Activated CD4-positive, alpha-beta T cell treated with anti-CD3 and anti-CD28 coated beads for 36 hours (primary cell): ENCODE measurements at regions of chr2 and their contacts with region 1.

Region 1: DNA sequence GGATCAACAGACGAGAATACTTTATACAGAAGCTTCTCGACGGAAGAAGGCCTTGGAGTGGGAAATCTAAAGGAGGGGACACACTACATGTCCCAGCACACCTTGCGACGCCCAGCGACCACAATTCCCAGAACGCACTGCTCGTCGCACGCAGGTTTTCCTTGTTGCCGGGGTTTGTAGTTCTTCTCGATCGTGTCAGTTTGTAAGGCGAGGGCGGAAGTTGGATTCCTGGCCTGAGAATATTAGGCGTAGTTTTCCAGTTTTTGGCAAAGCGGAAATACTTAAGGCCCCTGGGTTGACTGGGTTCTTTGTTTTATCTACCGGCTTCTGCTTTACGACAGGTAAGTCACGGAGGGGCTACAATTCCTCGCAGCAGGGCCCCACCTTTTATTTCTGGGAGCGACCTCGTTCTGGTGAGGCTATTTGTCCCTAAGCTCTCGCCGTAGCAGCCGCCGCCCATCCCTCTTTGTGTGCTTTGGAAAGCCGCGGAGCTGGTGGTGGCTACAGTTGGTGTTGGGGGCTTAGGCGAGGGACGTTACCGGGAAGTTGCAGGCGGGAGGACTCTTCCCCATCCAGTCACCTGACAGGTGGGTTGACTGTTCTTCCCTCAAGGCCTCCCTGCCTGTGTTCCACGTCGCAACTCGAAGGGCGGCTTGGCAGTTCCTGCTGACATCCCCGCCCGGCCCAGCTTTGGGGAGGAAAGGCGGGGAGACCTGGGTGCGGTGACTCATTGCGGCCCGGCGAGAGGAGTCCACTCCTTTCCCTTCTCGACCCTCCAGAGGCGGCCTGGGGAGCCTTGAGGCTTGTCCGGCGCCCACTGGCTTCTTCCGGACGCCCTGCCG is at the start of gene DYNC1I2:
- DNase-seq: peak; percentile 86
- ATAC-seq: peak; percentile 95
- H3K4me3 Mint-ChIP-seq: peak within 1 kb of the TSS; percentile 83
- H3K27ac Mint-ChIP-seq: peak within 1 kb of the TSS; percentile 90
- H3K4me1 Mint-ChIP-seq: peaks cover 15% of the 10 kb centered on the region
- H3K27me3 Mint-ChIP-seq: no peaks in the 10 kb centered on the region
- total RNA-seq, gene DYNC1I2: 46.2 to 51.1 TPM

Region 2: GRCh38 chr2:171574149-171574795 is 113.2 kb before region 1 on chr2:
- CTCF ChIA-PET with region 1: interaction called, 4 read pairs
- POLR2A ChIA-PET with region 1: no interaction called
- intact Hi-C with region 1: loop called in 1 of 2 experiments (anchors 5 kb)
- DNase-seq: peak; percentile 91
- ATAC-seq: peak; percentile 100
- H3K4me3 Mint-ChIP-seq: no peak overlapping the region
- H3K27ac Mint-ChIP-seq: no peak overlapping the region
- H3K4me1 Mint-ChIP-seq: peaks cover 6% of the 10 kb centered on the region
- H3K27me3 Mint-ChIP-seq: no peaks in the 10 kb centered on the region

Region 3: DNA sequence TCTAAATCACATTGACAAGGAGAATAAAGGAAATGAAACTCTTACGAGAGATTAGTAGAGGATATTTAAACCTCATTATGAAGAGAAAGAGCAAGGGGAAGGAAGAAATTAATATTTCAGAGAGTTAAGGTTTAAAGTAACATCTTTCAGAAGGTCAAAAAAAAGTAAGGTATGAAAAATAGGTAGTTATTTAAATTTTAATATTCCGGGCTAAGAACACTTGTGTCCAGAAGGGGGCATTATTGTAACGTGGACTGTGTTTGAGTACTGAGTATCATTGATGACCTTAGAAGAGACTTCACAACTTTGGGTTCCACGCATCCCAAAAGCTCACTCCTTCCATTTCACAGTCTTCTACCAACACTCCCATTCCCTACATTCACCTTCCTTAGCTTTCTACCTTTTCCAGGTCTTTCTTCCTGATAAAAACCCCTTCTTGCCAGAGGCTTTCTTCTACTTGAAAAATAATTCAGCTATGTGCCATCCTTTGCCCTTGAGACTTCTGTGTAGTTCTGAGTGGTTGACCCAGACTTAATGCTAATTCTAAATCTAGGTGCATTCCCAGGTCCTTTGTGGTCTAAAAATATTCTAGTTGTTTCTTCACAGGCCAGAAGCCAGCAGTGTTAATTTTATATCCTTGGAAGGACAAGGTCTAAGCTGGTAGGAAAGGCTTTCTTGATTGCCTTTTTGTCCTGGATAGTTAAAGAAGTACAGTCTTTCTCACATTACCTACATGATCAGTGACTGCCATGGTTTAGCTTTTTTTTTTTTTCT is 16.3 kb after region 1 on chr2:
- CTCF ChIA-PET with region 1: interaction called, 27 read pairs
- POLR2A ChIA-PET with region 1: no interaction called
- intact Hi-C with region 1: no loop called
- DNase-seq: no peak
- ATAC-seq: no peak
- H3K4me3 Mint-ChIP-seq: no peak overlapping the region
- H3K27ac Mint-ChIP-seq: no peak overlapping the region
- H3K4me1 Mint-ChIP-seq: peaks cover 8% of the 10 kb centered on the region
- H3K27me3 Mint-ChIP-seq: no peaks in the 10 kb centered on the region

Region 4: GRCh38 chr2:171922230-171923022 is 234.9 kb after region 1 on chr2 and contains the start of gene HAT1:
- CTCF ChIA-PET with region 1: no interaction called
- POLR2A ChIA-PET with region 1: interaction called, 3 read pairs
- intact Hi-C with region 1: loop called in 1 of 2 experiments (anchors 1 kb)
- DNase-seq: peak; percentile 99
- ATAC-seq: peak; percentile 96
- H3K4me3 Mint-ChIP-seq: peak within 1 kb of the TSS; percentile 94
- H3K27ac Mint-ChIP-seq: peak within 1 kb of the TSS; percentile 98
- H3K4me1 Mint-ChIP-seq: peaks cover 38% of the 10 kb centered on the region
- H3K27me3 Mint-ChIP-seq: no peaks in the 10 kb centered on the region
- total RNA-seq, gene HAT1: 88.5 to 92.6 TPM

Region 5: GRCh38 chr2:171999604-172000469 is 312.3 kb after region 1 on chr2 and contains the start of gene METAP1D:
- CTCF ChIA-PET with region 1: no interaction called
- POLR2A ChIA-PET with region 1: no interaction called
- intact Hi-C with region 1: loop called in 1 of 2 experiments (anchors 1 kb)
- DNase-seq: peak; percentile 93
- ATAC-seq: peak; percentile 95
- H3K4me3 Mint-ChIP-seq: peak within 1 kb of the TSS; percentile 75
- H3K27ac Mint-ChIP-seq: peak within 1 kb of the TSS; percentile 87
- H3K4me1 Mint-ChIP-seq: peaks cover 18% of the 10 kb centered on the region
- H3K27me3 Mint-ChIP-seq: no peaks in the 10 kb centered on the region
- total RNA-seq, gene METAP1D: 5.3 to 6.0 TPM